Gastrocnemius medialis (tissue), 4 donors: ENCODE measurements at regions of chr1 and their contacts with region 1.

Region 1: GRCh38 chr1:183471743-183472487 is 384 bp upstream of the SMG7 start:
- DNase-seq: peak; percentile 97
- ATAC-seq: peak; percentile 84 to 86
- H3K4me3 ChIP-seq: peak overlapping the region; percentile 95 to 99 (median 97)
- H3K27ac ChIP-seq: peak overlapping the region; percentile 96 to 98 (median 98)
- H3K4me1 ChIP-seq: peaks cover 35 to 41% of the 10 kb centered on the region in 2 donors
- H3K27me3 ChIP-seq: no peaks in the 10 kb centered on the region
- CTCF ChIP-seq: peak in 2 of 5 experiments; percentile 9 to 37
- POLR2A ChIP-seq: no peak

Region 2: DNA sequence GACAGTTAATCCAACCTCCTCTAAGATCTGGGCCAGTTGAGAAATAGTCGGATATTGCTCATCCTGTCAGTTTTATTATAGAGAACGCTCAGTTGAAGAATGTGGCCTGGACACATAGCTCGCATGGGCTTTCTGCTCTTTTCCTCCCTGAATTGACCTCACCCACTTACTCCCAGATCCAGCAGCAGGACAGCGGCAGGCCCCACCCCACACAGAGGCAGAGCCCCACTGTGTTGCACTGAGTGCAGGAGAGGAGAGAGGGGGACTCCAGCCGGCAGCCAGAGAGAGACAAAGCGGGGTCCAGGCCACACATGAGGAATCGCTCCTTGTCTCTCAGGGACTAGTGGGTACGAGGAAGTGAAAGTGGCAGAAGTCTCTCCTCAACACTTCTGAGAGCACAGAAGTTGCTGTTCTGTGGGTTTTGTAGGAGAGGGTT is 370.1 kb before region 1 on chr1:
- in situ Hi-C with region 1: no loop called
- intact Hi-C with region 1: loop called (anchors 5 kb)
- DNase-seq: no peak
- ATAC-seq: no peak
- H3K4me3 ChIP-seq: no peak overlapping the region
- H3K27ac ChIP-seq: peak overlapping the region; percentile 83 to 93 (median 91)
- H3K4me1 ChIP-seq: peaks cover 86 to 93% of the 10 kb centered on the region in 2 donors
- H3K27me3 ChIP-seq: no peaks in the 10 kb centered on the region
- CTCF ChIP-seq: no peak
- POLR2A ChIP-seq: no peak

Region 3: DNA sequence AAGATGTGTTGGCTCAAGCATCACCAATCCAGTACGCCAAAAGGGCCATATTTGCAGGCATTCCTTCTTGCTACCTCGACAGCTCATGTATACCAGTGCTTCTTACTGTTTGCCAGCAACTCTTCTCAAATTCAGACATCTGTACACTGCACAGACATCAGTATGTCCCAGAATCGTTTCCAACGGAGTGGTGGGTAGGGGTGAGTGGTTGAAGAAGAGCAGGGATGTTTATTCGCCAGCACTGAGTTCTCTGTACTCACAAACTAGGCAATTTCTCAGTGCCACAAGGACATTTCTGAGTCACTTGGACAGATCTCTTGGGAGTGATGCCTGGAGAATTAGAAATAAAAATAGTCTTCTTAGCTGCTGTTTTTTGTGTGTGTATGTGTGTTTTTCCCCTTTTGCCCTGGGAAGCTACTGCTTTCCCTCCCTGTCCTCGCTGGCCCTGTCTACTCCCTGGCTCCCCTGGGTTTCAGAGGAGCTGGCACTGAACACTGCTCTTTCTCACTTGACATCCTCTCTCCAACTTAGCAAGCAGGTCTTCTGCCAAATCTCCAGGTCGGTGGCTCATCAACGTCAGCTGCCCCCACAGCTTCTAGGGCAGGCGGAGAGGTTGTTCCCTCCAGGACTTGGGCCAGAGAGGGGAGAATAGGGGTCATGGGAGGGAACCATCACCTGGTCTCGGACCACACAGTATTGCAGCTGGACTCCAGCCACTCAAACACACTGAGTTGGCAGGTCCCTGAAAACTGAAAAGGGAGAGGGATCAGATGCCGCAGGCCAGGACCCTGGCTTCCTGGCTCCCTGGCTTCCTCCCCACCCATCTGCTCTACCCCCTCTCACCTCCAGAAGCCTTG is 144.3 kb before region 1 on chr1:
- in situ Hi-C with region 1: no loop called
- intact Hi-C with region 1: no loop called
- DNase-seq: peak in 1 of 2 donors; percentile 34
- ATAC-seq: peak in 1 of 2 donors; percentile 62
- H3K4me3 ChIP-seq: no peak overlapping the region
- H3K27ac ChIP-seq: peak overlapping the region in 2 of 4 donors; percentile 15 to 25
- H3K4me1 ChIP-seq: no peaks in the 10 kb centered on the region
- H3K27me3 ChIP-seq: peaks cover 0 to 3% (median 2%) of the 10 kb centered on the region in 3 donors
- CTCF ChIP-seq: no peak
- POLR2A ChIP-seq: no peak

Region 4: DNA sequence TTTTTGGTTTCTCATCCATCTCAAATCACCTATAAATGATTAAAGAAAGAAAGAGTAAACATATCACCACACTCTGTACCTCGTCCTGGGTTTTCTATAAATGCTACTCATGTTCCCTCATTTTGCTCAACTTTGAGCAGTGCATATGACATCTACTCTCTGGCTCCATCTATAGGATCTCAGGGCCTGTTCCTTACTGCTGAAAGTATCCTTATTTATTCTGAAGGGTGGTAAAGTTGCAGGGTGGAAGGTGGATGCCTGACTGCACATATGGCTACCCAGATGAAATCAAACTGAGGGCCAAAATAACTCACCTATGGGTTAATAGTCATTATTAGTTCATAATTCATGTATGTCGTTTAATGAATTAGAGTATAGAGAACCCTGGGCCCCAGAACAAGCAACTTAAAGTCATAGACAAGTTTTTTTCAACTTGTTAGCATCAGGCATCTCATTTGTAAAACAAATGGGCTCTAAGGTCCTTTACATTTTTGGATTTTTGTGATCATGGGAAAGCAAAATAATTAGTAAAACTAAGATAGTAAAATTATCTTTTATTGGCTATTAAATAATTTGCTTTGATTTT is 71.8 kb after region 1 on chr1:
- in situ Hi-C with region 1: loop called (anchors 5 to 10 kb)
- intact Hi-C with region 1: loop called (anchors 1 kb)
- DNase-seq: no peak
- ATAC-seq: peak; percentile 47 to 93
- H3K4me3 ChIP-seq: no peak overlapping the region
- H3K27ac ChIP-seq: peak overlapping the region in 1 of 4 donors; percentile 44
- H3K4me1 ChIP-seq: no peaks in the 10 kb centered on the region
- H3K27me3 ChIP-seq: no peaks in the 10 kb centered on the region
- CTCF ChIP-seq: peak; percentile 23 to 59 (median 46)
- POLR2A ChIP-seq: no peak

Region 5: GRCh38 chr1:183635606-183636333 is 163.9 kb after region 1 on chr1 and contains the start of gene ARPC5:
- in situ Hi-C with region 1: loop called in 2 of 4 experiments (anchors 5 to 10 kb)
- intact Hi-C with region 1: loop called (anchors 1 kb)
- DNase-seq: peak; percentile 90
- ATAC-seq: peak; percentile 90 to 97
- H3K4me3 ChIP-seq: peak within 1 kb of the TSS; percentile 79 to 92 (median 88)
- H3K27ac ChIP-seq: peak within 1 kb of the TSS; percentile 82 to 89 (median 84)
- H3K4me1 ChIP-seq: peaks cover 29 to 35% of the 10 kb centered on the region in 2 donors
- H3K27me3 ChIP-seq: no peaks in the 10 kb centered on the region
- CTCF ChIP-seq: no peak
- POLR2A ChIP-seq: peak; percentile 76 to 81
- total RNA-seq, gene ARPC5: 10.8 to 14.6 (median 13.0) TPM

Region 6: DNA sequence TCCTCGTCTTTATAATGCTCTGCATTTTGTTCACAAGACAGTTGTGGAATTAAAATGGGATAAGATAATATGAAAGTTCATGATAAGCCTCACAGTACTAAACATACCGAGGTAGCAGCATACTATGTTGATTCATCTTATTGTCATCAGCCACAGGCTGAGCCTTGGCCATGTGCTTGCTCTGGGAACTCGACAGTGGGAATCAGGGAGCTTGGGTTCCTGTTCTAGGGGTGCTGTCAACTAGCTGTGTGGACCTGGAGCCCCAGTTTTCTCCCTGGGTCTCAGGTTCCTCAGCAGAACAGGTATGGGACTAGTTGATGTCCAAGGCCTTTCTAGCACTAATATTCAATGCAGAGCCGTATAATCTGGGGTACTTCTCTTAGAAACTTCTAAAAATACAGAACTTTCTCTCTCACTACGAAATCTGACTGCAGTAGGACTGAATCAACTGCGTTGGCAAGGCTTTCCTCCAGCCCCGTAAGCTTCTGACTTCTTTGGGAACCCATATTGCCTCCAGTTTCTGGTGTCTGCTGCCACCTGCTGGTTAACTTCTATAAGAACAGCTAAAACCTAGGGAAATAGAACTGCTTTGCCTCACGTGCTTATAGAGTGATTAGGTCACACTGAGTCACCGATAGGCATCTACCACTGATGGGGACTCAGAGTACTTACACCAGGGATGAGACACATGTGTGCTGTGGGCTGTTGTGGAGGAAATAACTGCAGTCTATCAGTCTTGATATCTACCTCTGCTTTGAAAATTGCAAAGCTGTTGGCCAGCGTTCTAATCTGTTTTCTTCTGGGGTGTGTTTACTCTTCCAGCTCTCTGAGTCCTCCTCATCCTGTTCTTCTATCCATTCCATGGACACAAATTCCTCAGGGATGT is 444.0 kb after region 1 on chr1:
- in situ Hi-C with region 1: loop called in 1 of 4 experiments (anchors 25 kb)
- intact Hi-C with region 1: loop called (anchors 5 kb)
- DNase-seq: peak; percentile 61 to 64
- ATAC-seq: peak; percentile 92 to 95
- H3K4me3 ChIP-seq: no peak overlapping the region
- H3K27ac ChIP-seq: peak overlapping the region in 3 of 4 donors; percentile 27 to 46 (median 36)
- H3K4me1 ChIP-seq: peaks cover 8 to 9% of the 10 kb centered on the region in 2 donors
- H3K27me3 ChIP-seq: no peaks in the 10 kb centered on the region
- CTCF ChIP-seq: peak; percentile 81 to 88 (median 84)
- POLR2A ChIP-seq: no peak